ENCODE measurements at regions of chr9 and their contacts with region 1.

Region 1: GRCh38 chr9:118553465-118553864 is 815.8 kb downstream of the BRINP1 start:
- DNase-seq: no peak
- H3K4me3 Mint-ChIP-seq: no peak overlapping the region
- H3K27ac Mint-ChIP-seq: no peak overlapping the region
- H3K4me1 Mint-ChIP-seq: no peaks in the 10 kb centered on the region
- H3K27me3 Mint-ChIP-seq: no peaks in the 10 kb centered on the region
- CTCF ChIP-seq: no peak

Region 2: GRCh38 chr9:118570076-118570475 is 16.6 kb after region 1 on chr9:
- CTCF ChIA-PET with region 1: no interaction called
- POLR2A ChIA-PET with region 1: no interaction called
- intact Hi-C with region 1: no loop called
- DNase-seq: no peak
- H3K4me3 Mint-ChIP-seq: no peak overlapping the region
- H3K27ac Mint-ChIP-seq: peak overlapping the region; percentile 5
- H3K4me1 Mint-ChIP-seq: peaks cover 21% of the 10 kb centered on the region
- H3K27me3 Mint-ChIP-seq: no peaks in the 10 kb centered on the region
- CTCF ChIP-seq: no peak

Region 3: DNA sequence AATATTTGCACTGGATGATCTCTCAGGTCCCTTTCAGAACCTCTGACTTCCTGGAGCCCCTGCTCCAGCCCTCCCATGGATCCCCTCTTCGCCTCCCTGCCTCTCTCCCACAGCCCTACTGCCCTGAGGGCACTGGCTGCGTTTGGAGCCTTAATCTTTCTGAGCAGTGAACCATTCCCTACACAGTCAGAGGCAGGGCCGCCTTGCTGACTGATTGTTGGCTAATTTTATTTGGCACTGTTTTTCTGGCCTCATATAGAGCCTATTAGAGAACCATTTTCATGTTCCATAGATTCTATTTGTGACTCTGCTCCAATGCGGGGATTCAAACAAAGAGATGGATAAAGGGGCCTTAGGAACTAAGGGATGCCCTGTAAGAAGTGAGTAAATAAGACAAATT is 724.7 kb after region 1 on chr9:
- CTCF ChIA-PET with region 1: no interaction called
- POLR2A ChIA-PET with region 1: no interaction called
- intact Hi-C with region 1: loop called (anchors 5 kb)
- DNase-seq: no peak
- H3K4me3 Mint-ChIP-seq: no peak overlapping the region
- H3K27ac Mint-ChIP-seq: no peak overlapping the region
- H3K4me1 Mint-ChIP-seq: no peaks in the 10 kb centered on the region
- H3K27me3 Mint-ChIP-seq: no peaks in the 10 kb centered on the region
- CTCF ChIP-seq: no peak

Measured in MCF 10A (cell line).